Activated CD8-positive, alpha-beta T cell treated with anti-CD3 and anti-CD28 coated beads for 36 hours (primary cell): ENCODE measurements at regions of chr3 and their contacts with region 1.

Region 1: DNA sequence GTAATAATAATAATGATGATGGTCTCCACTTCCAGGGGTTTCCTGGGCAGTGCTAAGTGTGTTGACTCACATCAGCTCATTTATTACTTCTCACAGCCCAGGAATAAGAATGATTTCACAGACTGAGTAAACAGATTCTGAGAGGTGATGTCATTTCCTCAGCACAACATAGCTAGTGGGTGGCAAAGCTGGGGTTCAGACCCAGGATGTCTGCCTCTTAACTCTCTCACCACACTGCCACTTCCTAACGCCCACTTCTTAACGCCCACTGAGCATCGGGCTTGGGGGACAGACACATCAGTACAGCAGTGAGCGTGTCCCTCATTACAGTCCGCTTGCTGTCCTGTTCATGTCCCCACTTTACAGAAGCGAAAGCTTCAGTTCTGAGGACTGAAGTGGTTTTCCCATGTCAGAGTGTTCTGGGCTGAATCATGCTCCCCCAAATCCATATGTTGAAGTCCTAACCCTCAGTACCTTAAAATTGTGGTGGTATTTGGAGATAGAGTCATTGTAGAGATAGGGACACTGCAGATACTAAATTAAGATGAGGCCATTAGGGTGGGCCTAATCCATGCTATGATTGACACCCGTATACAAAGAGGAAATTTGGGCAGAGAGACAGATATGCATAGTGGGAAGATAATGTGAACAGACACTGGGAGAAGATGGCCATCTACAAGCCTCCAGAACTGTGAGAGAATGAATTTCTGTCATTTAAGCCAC is 68.0 kb downstream of the ATP2B2 start:
- DNase-seq: peak; percentile 93
- ATAC-seq: peak; percentile 92
- H3K4me3 Mint-ChIP-seq: no peak overlapping the region
- H3K27ac Mint-ChIP-seq: peak overlapping the region; percentile 72
- H3K4me1 Mint-ChIP-seq: peaks cover 29% of the 10 kb centered on the region
- H3K27me3 Mint-ChIP-seq: no peaks in the 10 kb centered on the region
- CTCF ChIP-seq: no peak

Region 2: DNA sequence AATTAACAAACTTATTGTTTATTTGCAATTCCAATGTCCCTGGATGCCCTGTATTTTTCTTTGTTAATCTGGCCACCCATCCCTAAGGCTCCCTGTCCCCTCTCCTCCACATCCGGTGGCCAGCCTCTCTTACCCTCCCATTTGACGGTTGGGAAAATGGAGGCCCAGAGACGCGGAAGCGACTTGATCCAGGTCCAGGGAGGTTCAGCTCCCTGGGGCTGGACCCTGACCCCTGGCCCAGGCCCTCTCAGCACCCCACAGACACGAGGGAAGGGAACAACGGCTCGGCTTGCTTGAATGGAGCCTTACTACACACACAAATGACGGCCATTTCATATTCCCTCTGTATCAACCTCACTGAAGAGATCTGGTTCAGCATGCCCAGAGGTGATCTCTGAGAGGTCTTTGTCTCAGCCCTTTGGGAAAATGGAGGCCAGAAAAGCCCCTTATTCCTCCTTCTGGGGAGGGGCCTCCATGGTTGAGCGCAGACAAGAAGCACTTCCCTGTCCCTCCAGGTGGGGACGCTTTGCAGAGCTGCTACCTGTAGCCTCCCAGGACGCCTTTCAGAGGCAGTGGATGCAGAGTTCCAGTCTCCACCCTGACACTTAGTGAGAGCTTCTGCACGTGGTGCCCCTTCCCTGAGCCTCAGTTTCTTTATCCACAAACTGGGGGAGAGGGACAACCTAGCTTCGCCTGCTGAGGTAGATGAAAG is 14.1 kb before region 1 on chr3:
- CTCF ChIA-PET with region 1: interaction called, 11 read pairs
- POLR2A ChIA-PET with region 1: interaction called, 3 read pairs
- intact Hi-C with region 1: no loop called
- DNase-seq: no peak
- ATAC-seq: no peak
- H3K4me3 Mint-ChIP-seq: no peak overlapping the region
- H3K27ac Mint-ChIP-seq: no peak overlapping the region
- H3K4me1 Mint-ChIP-seq: peaks cover 6% of the 10 kb centered on the region
- H3K27me3 Mint-ChIP-seq: no peaks in the 10 kb centered on the region
- CTCF ChIP-seq: no peak

Region 3: DNA sequence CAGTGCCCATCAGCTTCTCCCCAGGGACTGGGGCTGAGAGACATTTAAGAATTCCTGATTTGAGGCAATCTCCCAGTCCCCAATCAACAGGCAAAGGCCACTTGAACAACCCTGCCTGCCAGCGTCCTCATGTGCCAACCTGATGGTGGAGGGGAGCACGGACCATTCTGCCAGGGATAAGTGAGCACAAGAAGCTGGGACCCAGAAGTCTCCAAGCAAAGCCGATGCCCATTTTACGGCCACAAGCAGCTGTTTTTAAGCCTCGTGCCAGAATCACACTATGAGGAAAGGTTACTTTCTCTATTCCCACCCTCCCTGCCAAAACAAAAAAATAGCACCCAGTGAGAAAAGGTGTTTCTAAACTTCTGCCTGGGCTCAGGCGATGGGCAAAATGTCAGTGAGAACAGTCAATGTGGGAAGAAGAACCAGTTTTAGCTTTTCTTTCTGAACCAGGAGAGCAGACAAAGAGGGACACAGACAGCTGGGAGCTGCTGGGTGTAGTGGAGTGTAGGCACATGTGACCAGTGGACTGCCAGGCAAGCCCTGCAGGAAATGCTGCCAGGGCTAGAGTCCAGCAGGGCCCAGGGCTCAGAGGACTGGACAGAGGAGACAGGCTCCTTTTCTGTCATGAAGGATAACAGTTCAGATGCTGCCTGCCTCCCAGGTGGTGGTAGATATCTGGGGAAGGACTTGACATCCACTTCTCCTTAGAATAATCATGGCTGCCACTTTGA is 10.3 kb after region 1 on chr3:
- CTCF ChIA-PET with region 1: no interaction called
- POLR2A ChIA-PET with region 1: no interaction called
- intact Hi-C with region 1: no loop called
- DNase-seq: no peak
- ATAC-seq: no peak
- H3K4me3 Mint-ChIP-seq: no peak overlapping the region
- H3K27ac Mint-ChIP-seq: no peak overlapping the region
- H3K4me1 Mint-ChIP-seq: peaks cover 3% of the 10 kb centered on the region
- H3K27me3 Mint-ChIP-seq: peaks cover 3% of the 10 kb centered on the region
- CTCF ChIP-seq: no peak